H1 (cell line): ENCODE measurements at regions of chrX and their contacts with region 1.

Region 1: DNA sequence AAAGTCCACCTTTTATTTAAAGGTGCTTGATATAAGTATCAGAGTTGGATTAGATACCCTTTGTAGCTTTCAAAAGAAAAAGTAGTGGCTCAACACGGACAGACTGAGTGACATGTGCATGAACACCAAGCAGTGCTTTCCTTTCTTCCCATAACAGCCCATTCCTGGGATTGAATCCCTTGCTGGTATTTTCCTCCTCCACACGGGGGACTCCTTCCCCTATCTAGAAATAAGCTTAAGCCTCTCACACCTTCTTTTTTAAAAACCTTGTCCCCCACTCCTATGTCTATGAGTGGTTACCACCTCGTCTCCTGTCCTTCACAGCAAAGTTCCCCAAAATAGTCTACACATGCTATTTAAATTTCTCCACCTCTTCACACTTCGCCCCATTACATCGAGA is 5.1 kb downstream of the AP1S2 start:
- DNase-seq: no peak
- H3K4me3 ChIP-seq: peak overlapping the region in 2 of 4 experiments; percentile 5 to 99; a peak in 4 of 8 replicates
- H3K27ac ChIP-seq: no peak overlapping the region
- H3K4me1 ChIP-seq: peaks cover 0 to 4% (median 1%) of the 10 kb centered on the region in 4 experiments; a peak in 3 of 7 replicates
- H3K27me3 ChIP-seq: no peaks in the 10 kb centered on the region
- CTCF ChIP-seq: peak in 2 of 3 experiments; percentile 11 to 34; a peak in 2 of 4 replicates
- EP300 ChIP-seq: no peak
- POLR2A ChIP-seq: no peak
- RAD21 ChIP-seq: peak; percentile 49 to 63

Region 2: DNA sequence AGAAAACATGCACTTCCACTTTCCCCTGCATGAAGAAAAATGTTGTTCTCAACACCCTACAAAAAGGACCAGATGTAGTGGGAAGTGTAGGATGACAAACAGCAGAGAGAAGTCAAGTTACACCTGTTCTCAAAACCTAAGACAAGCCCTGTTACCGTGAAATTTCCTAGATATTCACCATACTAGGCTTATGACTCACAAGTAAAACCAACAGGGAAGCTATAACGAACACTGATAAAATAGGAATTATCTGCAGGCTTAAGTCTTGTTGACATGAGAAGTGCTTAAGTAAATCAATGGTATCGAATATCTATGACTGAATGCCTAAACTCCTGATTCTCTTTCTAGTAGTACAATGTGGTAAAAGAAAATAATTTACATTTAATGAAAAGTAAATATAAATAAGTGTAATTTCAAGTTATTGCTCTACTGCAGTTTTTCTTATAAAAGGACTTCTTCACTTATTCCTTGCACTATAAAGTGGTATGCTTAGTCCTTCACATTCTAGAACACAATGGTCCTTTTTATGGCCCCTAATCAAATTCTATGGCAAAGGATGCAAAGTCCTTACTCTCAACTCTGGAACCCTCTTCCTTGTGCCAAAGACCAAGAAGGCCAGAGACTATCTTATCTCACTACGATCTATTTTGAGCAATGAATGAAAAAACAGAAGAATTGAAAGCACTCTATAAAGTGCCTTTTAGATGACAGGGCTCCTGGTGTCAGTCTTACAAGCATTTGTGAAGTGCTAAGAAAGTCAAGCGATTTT is 14.5 kb before region 1 on chrX:
- CTCF ChIA-PET with region 1: interaction called, 10 read pairs
- POLR2A ChIA-PET with region 1: interaction called, 5 read pairs
- DNase-seq: no peak
- H3K4me3 ChIP-seq: no peak overlapping the region
- H3K27ac ChIP-seq: no peak overlapping the region
- H3K4me1 ChIP-seq: peaks cover 0 to 2% (median 0%) of the 10 kb centered on the region in 4 experiments; a peak in 2 of 7 replicates
- H3K27me3 ChIP-seq: no peaks in the 10 kb centered on the region
- CTCF ChIP-seq: no peak
- EP300 ChIP-seq: no peak
- POLR2A ChIP-seq: no peak
- RAD21 ChIP-seq: no peak

Region 3: DNA sequence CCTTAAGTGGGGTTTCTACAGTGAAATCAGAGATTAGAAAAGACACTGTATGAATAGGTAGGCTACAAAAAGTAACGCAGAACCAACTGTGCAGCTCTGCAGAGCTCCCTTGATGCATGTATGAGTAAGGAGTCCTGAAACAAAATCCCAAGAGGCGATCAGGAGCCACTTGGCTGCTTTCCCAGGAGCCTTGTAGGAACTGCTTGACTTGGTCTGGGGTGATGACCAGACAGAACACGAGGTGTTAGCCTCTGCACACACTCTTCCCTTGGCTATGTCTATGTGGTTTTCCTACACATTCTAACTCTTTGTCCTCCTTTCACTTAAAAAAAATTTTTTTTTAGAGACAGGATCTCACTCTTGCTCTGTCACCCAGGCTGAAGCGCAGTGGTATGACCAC is 27.8 kb after region 1 on chrX:
- CTCF ChIA-PET with region 1: no interaction called
- POLR2A ChIA-PET with region 1: no interaction called
- DNase-seq: no peak
- H3K4me3 ChIP-seq: no peak overlapping the region
- H3K27ac ChIP-seq: no peak overlapping the region
- H3K4me1 ChIP-seq: no peaks in the 10 kb centered on the region
- H3K27me3 ChIP-seq: no peaks in the 10 kb centered on the region
- CTCF ChIP-seq: no peak
- EP300 ChIP-seq: no peak
- POLR2A ChIP-seq: no peak
- RAD21 ChIP-seq: no peak

Region 4: GRCh38 chrX:15973299-15973698 is 123.7 kb after region 1 on chrX:
- CTCF ChIA-PET with region 1: interaction called, 10 read pairs
- POLR2A ChIA-PET with region 1: no interaction called
- DNase-seq: peak in 1 of 2 experiments; percentile 25
- H3K4me3 ChIP-seq: no peak overlapping the region
- H3K27ac ChIP-seq: no peak overlapping the region
- H3K4me1 ChIP-seq: no peaks in the 10 kb centered on the region
- H3K27me3 ChIP-seq: no peaks in the 10 kb centered on the region
- CTCF ChIP-seq: peak; percentile 46 to 83 (median 65)
- EP300 ChIP-seq: no peak
- POLR2A ChIP-seq: no peak
- RAD21 ChIP-seq: peak; percentile 74 to 83